Naive thymus-derived CD8-positive, alpha-beta T cell (primary cell): ENCODE measurements at regions of chr16 and their contacts with region 1.

Region 1: GRCh38 chr16:89720813-89721545 is at the starts of genes VPS9D1 and ZNF276:
- DNase-seq: peak; percentile 73 to 91 (median 86)
- ATAC-seq: peak; percentile 43 to 53
- H3K4me3 Mint-ChIP-seq: peak within 1 kb of the TSS; percentile 95 to 100 (median 97)
- H3K27ac Mint-ChIP-seq: peak within 1 kb of the TSS; percentile 92 to 99 (median 98)
- H3K4me1 Mint-ChIP-seq: peaks cover 11 to 45% (median 31%) of the 10 kb centered on the region in 4 donors
- H3K27me3 Mint-ChIP-seq: no peaks in the 10 kb centered on the region
- polyA plus RNA-seq, gene VPS9D1: 0.53 to 1.3 (median 0.91) TPM
- polyA plus RNA-seq, gene ZNF276: 15.0 to 56.0 (median 19.6) TPM

Region 2: DNA sequence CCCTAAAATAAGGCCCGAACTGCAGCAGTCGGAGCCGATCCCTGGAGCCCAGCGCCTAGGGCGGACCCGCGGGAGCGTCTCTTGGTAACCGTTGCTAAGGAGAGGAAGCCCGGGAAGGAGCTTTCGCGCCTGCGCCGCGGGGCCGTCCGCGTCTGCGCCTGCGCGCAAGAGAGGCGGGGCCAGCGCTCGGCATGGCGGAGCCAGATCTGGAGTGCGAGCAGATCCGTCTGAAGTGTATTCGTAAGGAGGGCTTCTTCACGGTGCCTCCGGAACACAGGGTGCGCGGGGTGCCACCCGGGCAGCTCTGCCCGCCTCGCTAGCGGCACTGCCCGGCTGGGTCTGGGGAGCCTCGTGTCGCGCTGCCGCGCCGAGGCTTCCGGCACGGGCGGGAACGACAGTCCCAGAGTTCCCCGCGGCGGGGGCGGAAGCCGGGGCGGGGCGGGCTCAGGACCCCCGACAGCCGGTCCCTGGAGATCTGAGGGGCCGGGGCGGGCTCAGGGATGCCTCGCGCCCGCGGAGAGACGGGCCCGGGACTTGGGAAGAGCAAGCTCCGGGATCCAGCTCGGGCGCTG is 34.4 kb before region 1 on chr16 and contains the start of gene CDK10:
- POLR2A ChIA-PET with region 1: interaction called, 10 read pairs
- DNase-seq: peak; percentile 80 to 98 (median 88)
- ATAC-seq: peak; percentile 90 to 93
- H3K4me3 Mint-ChIP-seq: peak within 1 kb of the TSS; percentile 86 to 96 (median 92)
- H3K27ac Mint-ChIP-seq: peak within 1 kb of the TSS; percentile 22 to 96 (median 92)
- H3K4me1 Mint-ChIP-seq: peaks cover 8 to 25% (median 15%) of the 10 kb centered on the region in 4 donors
- H3K27me3 Mint-ChIP-seq: no peaks in the 10 kb centered on the region
- polyA plus RNA-seq, gene CDK10: 25.4 to 63.3 (median 27.3) TPM

Region 3: DNA sequence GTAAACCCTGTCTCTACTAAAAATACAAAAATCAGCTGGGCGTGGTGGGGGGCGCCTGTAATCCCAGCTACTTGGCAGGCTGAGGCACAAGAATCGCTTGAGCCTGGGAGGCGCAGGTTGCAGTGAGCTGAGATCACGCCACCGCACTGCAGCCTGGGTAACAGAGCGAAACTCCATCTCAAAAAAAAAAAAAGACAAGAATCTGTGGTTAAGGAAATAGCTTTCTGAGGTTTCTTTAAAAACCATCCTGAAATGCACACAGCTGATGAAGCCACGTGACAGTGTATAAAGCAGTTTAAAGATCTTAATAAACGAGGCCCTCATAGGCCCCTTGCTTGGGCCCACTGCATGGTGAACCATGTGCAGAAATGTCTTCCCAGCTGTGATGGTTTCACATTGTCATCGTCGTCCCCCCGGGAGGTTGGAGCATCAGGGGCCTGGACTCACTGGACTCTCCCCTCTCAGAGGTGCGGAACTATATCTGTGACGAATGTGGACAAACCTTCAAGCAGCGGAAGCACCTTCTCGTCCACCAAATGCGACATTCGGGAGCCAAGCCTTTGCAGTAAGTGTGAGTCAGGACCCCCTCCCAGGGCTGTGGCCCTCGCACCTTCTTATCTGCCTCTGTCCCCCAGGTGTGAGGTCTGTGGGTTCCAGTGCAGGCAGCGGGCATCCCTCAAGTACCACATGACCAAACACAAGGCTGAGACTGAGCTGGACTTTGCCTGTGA is 16.5 kb after region 1 on chr16:
- POLR2A ChIA-PET with region 1: interaction called, 235 read pairs
- DNase-seq: peak in 8 of 10 donors; percentile 37 to 79 (median 58)
- ATAC-seq: peak; percentile 72 to 88
- H3K4me3 Mint-ChIP-seq: peak overlapping the region; percentile 26 to 83 (median 54)
- H3K27ac Mint-ChIP-seq: peak overlapping the region; percentile 60 to 92 (median 82)
- H3K4me1 Mint-ChIP-seq: peaks cover 17 to 75% (median 33%) of the 10 kb centered on the region in 4 donors
- H3K27me3 Mint-ChIP-seq: no peaks in the 10 kb centered on the region

Region 4: DNA sequence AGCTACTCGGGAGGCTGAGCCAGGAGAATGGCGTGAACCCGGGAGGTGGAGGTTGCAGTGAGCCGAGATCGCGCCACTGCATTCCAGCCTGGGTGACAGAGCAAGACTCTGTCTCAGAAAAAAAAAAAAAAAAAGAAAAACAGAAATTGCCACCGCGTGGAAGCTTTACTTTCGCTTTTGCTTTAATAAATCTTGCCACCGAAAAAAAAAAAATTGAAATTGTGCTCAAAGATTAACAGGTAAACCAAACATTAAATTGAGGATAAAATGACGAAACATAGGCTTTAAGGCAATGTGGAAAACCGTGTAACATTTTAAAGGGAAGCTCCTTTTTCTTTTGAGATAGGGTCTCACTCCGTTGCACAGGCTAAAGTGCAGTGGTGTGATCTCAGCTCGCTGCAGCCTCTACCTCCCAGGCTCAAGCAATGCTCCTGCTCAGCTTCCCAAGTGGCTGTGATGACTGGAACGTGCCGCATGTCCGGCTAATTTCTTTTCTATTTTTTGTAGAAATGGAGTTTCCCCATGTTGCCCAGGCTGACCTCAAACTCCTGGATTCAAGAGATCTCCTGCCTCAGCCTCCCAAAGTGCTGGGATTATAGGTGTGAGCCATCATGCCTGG is 40.4 kb after region 1 on chr16:
- POLR2A ChIA-PET with region 1: interaction called, 26 read pairs
- DNase-seq: peak in 3 of 10 donors; percentile 42 to 54 (median 50)
- ATAC-seq: peak; percentile 59 to 77
- H3K4me3 Mint-ChIP-seq: peak overlapping the region; percentile 79 to 93 (median 87)
- H3K27ac Mint-ChIP-seq: peak overlapping the region; percentile 84 to 95 (median 90)
- H3K4me1 Mint-ChIP-seq: peaks cover 10 to 54% (median 38%) of the 10 kb centered on the region in 4 donors
- H3K27me3 Mint-ChIP-seq: no peaks in the 10 kb centered on the region

Region 5: GRCh38 chr16:89791278-89791995 is 70.5 kb after region 1 on chr16:
- POLR2A ChIA-PET with region 1: interaction called, 48 read pairs
- DNase-seq: no peak
- ATAC-seq: no peak
- H3K4me3 Mint-ChIP-seq: no peak overlapping the region
- H3K27ac Mint-ChIP-seq: peak overlapping the region in 1 of 10 donors; percentile 20
- H3K4me1 Mint-ChIP-seq: peaks cover 4 to 22% (median 17%) of the 10 kb centered on the region in 4 donors
- H3K27me3 Mint-ChIP-seq: peaks cover 0 to 2% (median 0%) of the 10 kb centered on the region in 5 donors